ENCODE measurements at regions of chr19 and their contacts with region 1.

Region 1: DNA sequence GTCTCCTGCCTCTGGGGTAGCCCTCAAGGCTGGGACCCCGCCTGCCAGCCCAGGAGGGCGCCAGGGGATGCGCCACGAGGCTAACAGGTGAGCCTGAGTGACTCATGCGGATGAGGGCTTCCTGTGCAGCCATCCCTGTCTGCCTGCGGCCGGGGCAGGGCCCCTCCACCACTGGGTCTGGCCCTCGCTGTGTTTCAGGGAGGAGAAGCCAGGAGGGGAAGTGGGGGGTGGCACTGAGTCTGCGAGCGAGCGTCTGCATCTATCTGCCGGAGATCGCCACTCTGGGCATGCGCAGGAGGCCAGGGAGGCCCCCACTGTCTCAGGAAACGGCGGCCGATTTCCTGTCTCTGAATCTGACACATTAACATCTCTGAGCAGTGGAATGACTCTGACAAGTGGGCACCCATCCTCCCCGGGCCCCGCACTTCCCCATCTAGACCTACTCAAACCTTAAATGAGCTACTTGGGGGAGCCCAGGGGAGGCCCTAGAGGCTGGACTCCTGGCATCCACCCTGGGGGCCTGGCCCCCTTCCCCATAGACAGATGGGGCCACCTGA is 19.7 kb downstream of the RFX1 start:
- DNase-seq: peak; percentile 98
- H3K4me3 ChIP-seq: peak overlapping the region; percentile 67
- H3K27ac ChIP-seq: peak overlapping the region; percentile 99
- H3K4me1 ChIP-seq: peaks cover 78% of the 10 kb centered on the region
- CTCF ChIP-seq: no peak

Region 2: DNA sequence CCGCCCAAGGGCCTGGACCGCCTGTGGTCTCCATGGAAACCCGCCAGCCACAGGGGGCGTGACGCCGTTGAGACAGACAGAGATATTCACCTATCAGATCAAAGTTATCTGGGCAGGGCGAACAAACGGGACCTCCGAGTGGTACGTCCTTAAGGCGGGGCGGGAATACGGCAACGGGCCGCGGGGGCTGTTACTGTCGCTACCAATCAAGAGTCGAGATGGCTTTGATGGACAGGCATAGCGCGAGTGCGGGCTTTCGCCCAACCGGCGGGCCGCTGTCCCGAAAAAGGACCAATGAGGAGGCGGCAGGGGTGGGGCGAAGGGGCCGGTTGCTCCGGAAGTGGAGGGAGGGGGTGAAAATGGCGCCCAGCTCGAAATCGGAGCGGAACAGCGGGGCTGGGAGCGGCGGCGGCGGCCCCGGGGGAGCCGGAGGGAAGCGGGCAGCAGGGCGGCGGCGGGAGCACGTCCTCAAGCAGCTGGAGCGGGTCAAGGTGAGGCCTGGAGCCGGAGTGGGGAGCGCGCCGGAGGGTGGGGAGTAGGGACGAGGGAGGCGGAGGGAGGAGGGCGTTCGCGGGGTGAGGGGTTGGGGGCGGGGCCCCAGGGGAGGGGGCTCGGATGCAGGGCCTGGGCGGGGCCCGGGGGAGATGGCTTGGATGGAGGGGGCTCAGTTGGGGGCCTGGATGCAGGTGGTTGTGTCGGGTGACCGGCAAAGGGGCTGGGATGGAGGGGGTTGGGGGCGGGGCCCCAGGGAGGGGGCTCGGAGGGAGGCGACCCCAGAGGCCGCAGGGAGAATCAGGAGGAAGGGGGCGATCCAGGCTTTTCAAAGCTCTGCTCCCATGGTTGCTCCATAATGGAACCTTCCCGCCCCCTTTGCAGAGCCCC is 34.0 kb before region 1 on chr19 and contains the start of gene DCAF15:
- CTCF ChIA-PET with region 1: no interaction called
- POLR2A ChIA-PET with region 1: interaction called, 4 read pairs
- intact Hi-C with region 1: loop called (anchors 2 kb)
- DNase-seq: peak; percentile 100
- H3K4me3 ChIP-seq: peak within 1 kb of the TSS; percentile 85
- H3K27ac ChIP-seq: peak within 1 kb of the TSS; percentile 41
- H3K4me1 ChIP-seq: peaks cover 16% of the 10 kb centered on the region
- CTCF ChIP-seq: no peak
- total RNA-seq, gene DCAF15: 61.0 and 71.3 TPM in 2 replicates

Region 3: DNA sequence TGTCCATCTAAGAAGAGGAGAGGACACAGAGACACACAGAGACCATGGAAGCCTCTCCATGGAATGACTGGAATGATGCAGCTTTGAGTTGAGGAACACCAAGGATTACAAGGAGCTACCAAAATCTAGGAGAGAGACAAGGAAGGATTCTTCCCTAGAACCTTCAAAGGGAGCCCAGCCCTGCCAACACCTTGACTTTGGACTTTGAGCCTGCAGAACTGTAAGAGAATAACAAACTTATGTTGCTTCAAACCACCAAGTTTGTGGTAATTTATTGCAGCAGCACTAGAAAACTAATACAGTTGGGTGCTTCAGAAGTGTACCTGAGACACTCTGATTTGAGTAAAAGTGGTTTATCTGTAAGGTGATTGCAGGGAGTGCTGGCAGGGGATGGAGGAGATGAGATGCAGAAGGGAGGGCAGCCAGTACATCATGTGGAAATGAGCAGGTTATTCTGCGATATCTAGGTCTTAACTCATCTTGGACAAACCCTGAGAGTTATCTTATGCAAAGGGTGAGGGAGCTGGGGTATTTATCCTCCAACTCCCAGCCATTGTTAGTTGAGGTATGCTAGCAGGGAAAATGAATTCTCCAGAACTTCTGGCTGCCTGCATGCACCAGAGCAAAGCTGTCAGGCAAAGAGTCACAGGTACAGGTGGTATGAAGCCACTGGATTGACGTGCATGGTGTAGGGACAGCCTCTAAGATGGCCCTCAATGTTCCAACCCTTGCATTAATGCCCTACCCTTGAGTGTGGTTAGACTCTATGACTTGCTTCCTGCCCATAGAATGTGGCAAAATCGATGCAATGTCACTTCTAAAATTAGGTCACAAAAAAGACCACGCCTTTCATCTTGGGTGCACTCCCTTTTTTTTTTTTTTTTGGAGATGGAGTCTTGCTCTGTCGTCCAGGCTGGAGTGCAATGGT is 250.9 kb after region 1 on chr19:
- CTCF ChIA-PET with region 1: no interaction called
- POLR2A ChIA-PET with region 1: no interaction called
- intact Hi-C with region 1: no loop called
- DNase-seq: no peak
- H3K4me3 ChIP-seq: no peak overlapping the region
- H3K27ac ChIP-seq: no peak overlapping the region
- H3K4me1 ChIP-seq: no peaks in the 10 kb centered on the region
- CTCF ChIP-seq: no peak